ENCODE measurements at regions of chr1 and their contacts with region 1.

Region 1: DNA sequence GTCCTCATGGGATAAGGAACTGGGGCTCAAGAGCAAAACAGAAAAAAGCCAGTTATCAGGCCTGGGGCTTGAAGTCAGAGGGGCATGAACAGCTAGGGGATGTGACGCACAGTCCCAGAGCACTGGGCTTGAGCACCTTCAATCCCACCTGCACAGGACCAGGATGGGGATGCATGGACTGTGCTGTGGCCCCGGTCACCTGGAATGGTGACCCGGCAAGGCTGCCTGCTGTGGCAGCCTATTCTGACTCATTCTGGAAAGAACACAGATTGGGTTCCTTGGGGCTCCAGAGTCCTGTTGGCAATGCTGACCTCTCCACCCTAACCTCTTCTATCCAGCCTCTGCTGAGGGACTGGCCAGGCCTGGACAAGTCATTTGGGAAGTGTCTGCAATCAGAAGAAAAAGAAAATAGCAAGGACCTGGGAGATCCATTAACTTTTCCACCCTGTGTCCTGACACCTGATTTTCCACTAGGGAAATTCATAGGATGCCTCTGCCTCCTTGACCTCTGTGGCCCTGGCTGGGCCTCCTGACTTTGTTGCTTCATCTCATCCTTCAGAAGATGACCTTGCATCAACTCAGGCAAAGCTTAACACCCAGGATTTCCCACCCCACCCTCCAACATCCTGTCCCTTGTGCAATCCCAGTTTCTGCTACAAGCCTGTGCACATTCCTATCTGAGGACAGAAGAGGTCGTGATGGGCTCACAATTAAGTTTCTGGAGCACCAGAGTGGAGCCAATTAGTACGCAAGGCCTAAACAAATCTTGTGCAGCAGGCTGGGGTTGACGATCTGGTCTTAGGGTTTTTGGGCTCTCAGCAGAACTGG is 17.9 kb upstream of the FMOD start:
- DNase-seq: peak; percentile 73
- ATAC-seq: peak; percentile 96

Region 2: DNA sequence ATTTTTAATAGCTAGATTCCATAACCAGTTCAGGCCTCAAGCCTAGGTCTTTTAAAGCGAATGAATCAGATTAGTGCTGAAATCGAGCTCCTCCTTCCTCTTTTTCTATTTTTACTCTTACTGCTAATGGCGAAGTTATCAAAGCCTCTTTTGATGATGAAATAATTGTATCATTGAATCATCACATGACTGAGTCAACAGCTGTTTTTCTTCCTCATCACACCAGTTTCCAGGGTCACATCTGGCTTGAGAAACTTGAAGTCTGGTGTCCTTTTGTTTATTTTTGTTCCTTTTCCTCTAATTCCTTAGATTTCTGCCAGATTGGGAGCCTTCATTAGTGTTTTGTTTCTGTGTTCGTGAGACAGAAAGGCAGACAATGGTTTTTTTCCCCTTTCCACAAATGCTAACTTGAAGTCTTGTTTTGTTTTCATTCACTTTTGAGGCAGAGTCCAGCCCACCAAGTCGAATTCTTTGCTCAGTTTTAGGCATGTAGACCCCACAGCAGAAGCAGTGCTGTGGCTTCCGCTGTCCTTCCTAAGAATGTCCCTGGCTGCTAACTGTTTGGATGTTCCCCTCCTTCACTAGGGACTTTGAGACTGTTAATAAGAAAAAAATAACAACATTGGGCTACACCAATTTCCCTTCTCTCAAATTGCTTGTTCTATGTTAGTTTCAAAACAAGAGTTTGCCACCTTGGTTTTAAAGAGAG is 33.9 kb after region 1 on chr1:
- intact Hi-C with region 1: loop called (anchors 5 kb)
- DNase-seq: no peak
- ATAC-seq: peak; percentile 79

Region 3: DNA sequence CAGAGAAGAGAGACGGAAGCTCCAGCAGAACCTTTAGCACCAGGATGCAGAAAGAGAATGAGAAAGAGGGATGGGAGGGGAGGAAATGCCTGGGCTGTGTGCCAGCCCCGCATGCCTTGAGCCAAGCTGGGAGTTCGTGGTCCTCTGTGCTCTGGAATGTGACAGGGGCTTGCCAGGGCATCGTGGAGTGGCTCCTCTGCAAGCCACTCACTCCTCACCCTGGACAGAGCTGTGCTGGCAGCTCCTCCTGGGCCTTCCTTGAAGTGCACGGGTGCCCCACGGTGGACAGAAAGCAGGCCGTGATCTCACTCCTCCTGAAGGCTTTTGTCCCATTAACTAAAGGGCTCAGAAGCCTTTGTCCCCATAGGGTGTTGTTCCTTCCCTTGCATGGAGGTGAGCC is 71.9 kb after region 1 on chr1:
- intact Hi-C with region 1: loop called (anchors 2 kb)
- DNase-seq: peak; percentile 87
- ATAC-seq: peak; percentile 96

Region 4: DNA sequence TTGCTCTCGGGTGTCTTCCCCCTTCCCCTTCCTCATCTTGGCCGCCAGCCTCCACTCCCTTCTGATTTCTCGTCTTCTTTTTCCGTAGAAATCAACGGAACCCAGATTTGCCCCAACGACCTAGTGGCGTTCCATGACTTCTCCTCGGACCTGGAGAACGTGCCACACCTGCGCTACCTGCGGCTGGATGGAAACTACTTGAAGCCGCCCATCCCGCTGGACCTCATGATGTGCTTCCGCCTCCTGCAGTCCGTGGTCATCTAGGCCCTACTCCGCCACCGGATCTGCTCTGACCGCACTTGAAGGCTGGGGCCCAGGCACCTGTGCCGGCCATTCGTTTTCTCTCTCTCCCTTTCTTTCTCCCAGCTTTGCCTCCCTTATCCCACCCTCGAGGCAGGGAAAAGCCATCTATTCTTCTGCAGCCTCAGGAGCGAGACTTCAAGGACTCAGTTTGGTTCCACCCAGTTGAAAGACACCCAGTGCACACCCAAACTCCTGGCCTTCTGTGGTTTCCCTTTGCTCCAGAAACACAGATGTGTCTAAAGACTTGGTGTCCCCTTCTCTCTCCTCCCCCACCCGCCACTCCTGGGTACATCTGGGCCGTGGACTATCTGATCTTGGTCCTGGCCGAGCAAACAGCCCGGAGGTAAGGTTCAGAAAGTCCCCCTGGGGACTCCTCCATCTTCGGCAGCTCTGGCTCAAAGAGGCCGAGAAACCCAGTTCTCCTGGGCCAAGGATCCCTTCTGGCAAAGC is 118.0 kb after region 1 on chr1:
- intact Hi-C with region 1: loop called (anchors 1 kb)
- DNase-seq: no peak
- ATAC-seq: peak; percentile 34

Measured in Right ventricle myocardium inferior (tissue), 1 donor.